Vagina (tissue), 2 donors: ENCODE measurements at regions of chr2 and their contacts with region 1.

Region 1: GRCh38 chr2:68282811-68283418 is 30.6 kb upstream of the PPP3R1 start:
- DNase-seq: no peak
- H3K4me3 ChIP-seq: no peak overlapping the region
- H3K27ac ChIP-seq: no peak overlapping the region
- H3K4me1 ChIP-seq: peaks cover 24% of the 10 kb centered on the region
- H3K27me3 ChIP-seq: no peaks in the 10 kb centered on the region
- CTCF ChIP-seq: peak; percentile 41 to 55 (median 46)
- POLR2A ChIP-seq: no peak

Region 2: GRCh38 chr2:67571785-67572718 is 710.9 kb before region 1 on chr2:
- intact Hi-C with region 1: no loop called
- DNase-seq: no peak
- H3K4me3 ChIP-seq: no peak overlapping the region
- H3K27ac ChIP-seq: no peak overlapping the region
- H3K4me1 ChIP-seq: peaks cover 8% of the 10 kb centered on the region
- H3K27me3 ChIP-seq: no peaks in the 10 kb centered on the region
- CTCF ChIP-seq: no peak
- POLR2A ChIP-seq: no peak

Region 3: GRCh38 chr2:67923696-67924095 is 359.2 kb before region 1 on chr2:
- intact Hi-C with region 1: no loop called
- DNase-seq: no peak
- H3K4me3 ChIP-seq: no peak overlapping the region
- H3K27ac ChIP-seq: no peak overlapping the region
- H3K4me1 ChIP-seq: no peaks in the 10 kb centered on the region
- H3K27me3 ChIP-seq: no peaks in the 10 kb centered on the region
- CTCF ChIP-seq: no peak
- POLR2A ChIP-seq: no peak

Region 4: GRCh38 chr2:68252407-68253218 is 30.3 kb before region 1 on chr2 and contains the start of gene PPP3R1:
- intact Hi-C with region 1: loop called (anchors 1 kb)
- DNase-seq: peak; percentile 97 to 98
- H3K4me3 ChIP-seq: peak within 1 kb of the TSS; percentile 86 to 90
- H3K27ac ChIP-seq: peak within 1 kb of the TSS; percentile 94
- H3K4me1 ChIP-seq: peaks cover 44% of the 10 kb centered on the region
- H3K27me3 ChIP-seq: no peaks in the 10 kb centered on the region
- CTCF ChIP-seq: peak in 1 of 3 experiments; percentile 29
- POLR2A ChIP-seq: peak in 1 of 2 donors; percentile 89
- total RNA-seq, gene PPP3R1: 28.2 TPM

Region 5: DNA sequence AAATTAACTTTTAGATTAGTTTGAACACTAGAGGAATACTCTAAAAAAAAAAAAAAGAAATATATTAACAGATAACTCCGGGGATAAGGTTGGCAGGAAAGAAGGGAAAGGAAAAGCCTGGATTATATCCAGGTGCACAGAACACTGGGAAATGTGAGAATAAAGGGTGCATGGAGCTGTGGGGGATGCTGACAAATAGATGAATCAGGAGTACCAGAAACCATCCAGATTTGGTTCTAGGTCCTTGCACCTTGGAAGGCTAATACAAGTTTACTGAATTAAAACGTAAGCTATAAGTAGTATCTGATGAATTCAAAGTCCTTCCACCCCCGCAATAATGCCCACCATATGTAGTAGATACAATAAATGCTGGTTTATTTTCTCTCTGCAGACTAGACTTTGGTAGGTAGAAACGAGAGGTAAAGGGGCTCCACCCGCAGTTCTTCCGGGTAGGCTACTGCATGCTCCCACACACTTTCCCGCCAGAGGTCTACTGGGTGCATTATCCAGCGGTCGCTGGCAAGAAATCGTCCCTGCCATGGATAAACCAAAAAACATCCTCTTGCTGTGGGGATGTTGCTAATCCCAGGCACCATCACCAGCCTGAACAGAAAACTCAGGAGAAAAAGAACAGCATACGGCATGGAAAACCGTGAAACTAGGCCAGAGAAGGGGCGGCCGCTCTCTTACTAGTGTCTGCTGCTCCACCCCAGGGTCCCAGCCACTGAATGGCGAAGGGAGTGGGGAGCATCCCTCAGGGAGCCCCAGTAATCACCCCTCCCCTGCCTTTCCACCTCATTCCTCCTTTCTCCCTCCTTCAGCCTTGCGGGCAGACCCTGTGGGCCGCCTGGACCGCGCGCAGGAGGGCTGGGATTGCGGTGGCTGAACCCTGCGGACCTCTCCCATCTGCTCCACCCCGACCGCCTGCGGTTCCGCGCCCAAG is 35.3 kb after region 1 on chr2:
- intact Hi-C with region 1: no loop called
- DNase-seq: no peak
- H3K4me3 ChIP-seq: peak overlapping the region; percentile 59 to 82
- H3K27ac ChIP-seq: peak overlapping the region; percentile 94
- H3K4me1 ChIP-seq: peaks cover 26% of the 10 kb centered on the region
- H3K27me3 ChIP-seq: no peaks in the 10 kb centered on the region
- CTCF ChIP-seq: no peak
- POLR2A ChIP-seq: no peak

Region 6: GRCh38 chr2:68556381-68556780 is 273.5 kb after region 1 on chr2:
- intact Hi-C with region 1: no loop called
- DNase-seq: no peak
- H3K4me3 ChIP-seq: no peak overlapping the region
- H3K27ac ChIP-seq: no peak overlapping the region
- H3K4me1 ChIP-seq: no peaks in the 10 kb centered on the region
- H3K27me3 ChIP-seq: no peaks in the 10 kb centered on the region
- CTCF ChIP-seq: no peak
- POLR2A ChIP-seq: no peak